Activated naive CD4-positive, alpha-beta T cell treated with anti-CD3 and anti-CD28 coated beads for 36 hours (primary cell): ENCODE measurements at regions of chr2 and their contacts with region 1.

Region 1: DNA sequence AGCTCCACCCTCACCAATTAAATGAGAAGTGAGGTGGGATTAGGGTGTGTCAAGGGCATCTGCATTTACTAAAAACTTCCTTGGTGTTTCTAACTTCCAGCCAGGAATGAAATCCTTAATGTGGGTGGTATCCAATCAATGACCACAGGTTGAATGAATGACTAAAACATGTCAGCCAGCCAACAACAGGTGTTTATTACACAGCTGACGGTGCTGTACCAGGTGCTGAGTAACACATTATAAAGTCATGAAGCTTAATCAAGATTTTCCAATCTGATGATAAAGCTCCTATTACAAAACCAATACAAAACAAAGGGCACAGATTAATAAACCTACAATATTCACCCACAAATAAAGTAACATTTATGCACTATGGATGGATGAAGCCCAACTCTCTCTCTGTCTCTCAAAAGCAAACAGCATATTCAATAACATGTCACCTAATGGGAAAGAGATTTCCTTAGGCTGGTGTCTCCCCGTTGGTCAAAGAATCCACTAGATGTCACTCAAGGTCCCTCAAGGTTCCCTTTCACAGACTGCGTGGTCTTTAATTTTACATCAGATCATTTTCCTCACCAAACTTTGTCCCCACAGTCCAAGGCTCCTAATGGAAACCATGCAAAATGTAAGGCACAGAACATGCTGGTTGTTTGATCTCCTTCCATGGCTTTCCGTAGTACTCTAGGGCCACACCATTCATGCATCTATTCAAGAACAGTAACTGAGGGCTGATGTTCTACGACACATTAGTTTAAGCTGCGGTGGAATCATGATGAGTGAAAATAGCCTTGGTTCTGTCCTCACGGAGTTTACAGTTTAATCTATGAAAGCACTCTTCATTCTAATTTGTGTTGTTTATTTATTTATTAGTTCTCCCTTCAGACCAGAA is 6.4 kb upstream of the PTPN4 start:
- DNase-seq: peak; percentile 43
- H3K4me3 Mint-ChIP-seq: no peak overlapping the region
- H3K27ac Mint-ChIP-seq: no peak overlapping the region
- H3K4me1 Mint-ChIP-seq: peaks cover 14% of the 10 kb centered on the region
- H3K27me3 Mint-ChIP-seq: no peaks in the 10 kb centered on the region

Region 2: DNA sequence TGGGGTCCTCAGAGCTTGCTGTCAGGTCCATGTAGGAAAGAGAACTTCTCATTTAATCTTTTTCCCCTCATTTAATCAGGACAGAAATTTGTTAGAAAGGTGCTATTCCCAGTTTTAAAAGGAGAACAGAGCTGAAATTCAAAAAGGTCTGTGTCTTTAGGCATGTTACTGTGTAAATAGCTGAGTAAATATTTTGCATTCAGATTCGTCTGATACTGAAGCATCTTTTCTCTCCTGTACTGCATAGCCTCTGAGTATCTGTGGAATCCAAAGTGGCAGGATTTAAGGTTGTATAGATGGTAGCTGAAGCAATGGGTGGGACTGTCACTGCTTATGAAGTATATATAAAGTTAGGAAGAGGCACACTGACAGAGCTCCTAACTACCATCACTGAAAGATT is 15.5 kb after region 1 on chr2:
- CTCF ChIA-PET with region 1: interaction called, 10 read pairs
- intact Hi-C with region 1: no loop called
- DNase-seq: no peak
- H3K4me3 Mint-ChIP-seq: no peak overlapping the region
- H3K27ac Mint-ChIP-seq: no peak overlapping the region
- H3K4me1 Mint-ChIP-seq: peaks cover 39% of the 10 kb centered on the region
- H3K27me3 Mint-ChIP-seq: no peaks in the 10 kb centered on the region

Region 3: DNA sequence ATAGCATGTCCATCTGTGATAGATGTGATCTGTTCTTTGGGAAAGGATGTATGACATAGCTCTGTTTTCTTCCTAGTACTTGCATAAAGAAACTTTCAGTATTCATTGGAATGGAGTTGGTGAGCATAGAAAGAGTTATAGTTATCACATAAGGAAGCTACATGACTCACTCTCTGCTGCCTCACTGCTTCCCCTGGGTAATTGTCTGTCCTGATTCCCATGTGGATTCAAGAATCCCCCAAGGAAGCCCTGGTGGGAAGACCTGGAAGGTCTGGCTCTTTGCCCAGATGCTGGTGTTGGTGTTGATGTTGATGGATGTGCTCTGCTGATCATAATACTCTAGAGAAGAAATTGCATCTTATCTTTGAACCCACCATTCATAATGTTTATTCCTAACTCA is 67.0 kb after region 1 on chr2:
- CTCF ChIA-PET with region 1: interaction called, 59 read pairs
- intact Hi-C with region 1: loop called (anchors 1 kb)
- DNase-seq: no peak
- H3K4me3 Mint-ChIP-seq: no peak overlapping the region
- H3K27ac Mint-ChIP-seq: no peak overlapping the region
- H3K4me1 Mint-ChIP-seq: peaks cover 41% of the 10 kb centered on the region
- H3K27me3 Mint-ChIP-seq: no peaks in the 10 kb centered on the region

Region 4: GRCh38 chr2:119826370-119826961 is 73.2 kb after region 1 on chr2:
- CTCF ChIA-PET with region 1: interaction called, 59 read pairs
- intact Hi-C with region 1: loop called (anchors 1 kb)
- DNase-seq: peak; percentile 58
- H3K4me3 Mint-ChIP-seq: no peak overlapping the region
- H3K27ac Mint-ChIP-seq: no peak overlapping the region
- H3K4me1 Mint-ChIP-seq: peaks cover 43% of the 10 kb centered on the region
- H3K27me3 Mint-ChIP-seq: no peaks in the 10 kb centered on the region